ENCODE measurements at regions of chr12 and their contacts with region 1.

Region 1: DNA sequence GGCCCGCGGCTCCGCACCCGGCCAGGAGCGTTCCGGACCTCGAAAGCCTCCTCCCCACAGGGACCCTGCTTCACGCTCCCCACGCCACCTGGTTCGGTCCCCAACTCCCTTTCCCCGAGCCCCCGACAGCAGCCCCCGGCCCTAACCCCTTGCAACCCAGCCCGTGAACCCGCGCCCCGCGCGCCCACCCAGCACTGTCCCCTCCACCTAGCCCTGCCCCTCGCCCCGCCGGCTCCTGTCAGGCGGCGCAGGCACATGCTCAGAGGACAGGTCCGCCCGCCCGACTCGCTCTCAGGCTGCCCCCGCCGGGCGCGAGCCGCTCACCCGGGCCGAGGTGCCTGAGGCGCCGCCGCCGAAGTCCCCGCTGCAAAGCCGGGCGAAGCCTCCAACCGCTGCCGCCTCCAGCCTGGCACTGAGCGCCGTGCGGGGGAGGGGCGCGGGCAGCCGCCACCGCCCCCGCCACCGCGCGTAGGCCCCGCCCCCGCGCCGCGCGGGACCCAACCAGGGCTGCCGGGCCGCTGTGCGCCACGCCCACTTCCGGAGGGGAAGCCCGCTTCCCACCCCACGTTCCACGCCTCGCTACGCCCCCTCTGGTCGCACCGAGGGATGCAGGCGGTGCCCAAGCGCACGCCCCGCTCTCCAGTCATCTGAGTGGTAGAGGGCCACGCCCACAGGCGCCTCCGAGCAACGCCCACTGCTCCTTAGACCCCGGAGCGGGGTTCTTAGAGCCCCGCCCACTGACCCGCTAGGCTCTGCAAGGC is at the start of gene CORO1C:
- DNase-seq: peak; percentile 86 to 97 (median 92)
- ATAC-seq: peak; percentile 75
- H3K4me3 ChIP-seq: peak within 1 kb of the TSS; percentile 91 to 93
- H3K4me3 Mint-ChIP-seq: peak within 1 kb of the TSS; percentile 94
- H3K27ac ChIP-seq: peak within 1 kb of the TSS; percentile 67 to 85
- H3K27ac Mint-ChIP-seq: peak within 1 kb of the TSS; percentile 86
- H3K4me1 ChIP-seq: peaks cover 7% of the 10 kb centered on the region
- H3K4me1 Mint-ChIP-seq: peaks cover 26% of the 10 kb centered on the region
- H3K27me3 ChIP-seq: no peaks in the 10 kb centered on the region
- H3K27me3 Mint-ChIP-seq: no peaks in the 10 kb centered on the region
- CTCF ChIP-seq: peak; percentile 74
- total RNA-seq, gene CORO1C: 10.3 to 15.4 TPM

Region 2: GRCh38 chr12:108691175-108691997 is 39.9 kb before region 1 on chr12:
- CTCF ChIA-PET with region 1: no interaction called
- POLR2A ChIA-PET with region 1: no interaction called
- intact Hi-C with region 1: loop called (anchors 2 kb)
- DNase-seq: peak in 8 of 9 experiments; percentile 47 to 81 (median 68)
- ATAC-seq: peak; percentile 78
- H3K4me3 ChIP-seq: peak overlapping the region; percentile 21 to 30
- H3K4me3 Mint-ChIP-seq: peak overlapping the region; percentile 71
- H3K27ac ChIP-seq: peak overlapping the region in 1 of 2 experiments; percentile 55
- H3K27ac Mint-ChIP-seq: peak overlapping the region; percentile 67
- H3K4me1 ChIP-seq: peaks cover 36% of the 10 kb centered on the region
- H3K4me1 Mint-ChIP-seq: peaks cover 57% of the 10 kb centered on the region
- H3K27me3 ChIP-seq: no peaks in the 10 kb centered on the region
- H3K27me3 Mint-ChIP-seq: no peaks in the 10 kb centered on the region
- CTCF ChIP-seq: no peak

Region 3: GRCh38 chr12:108744021-108744897 is 13.0 kb after region 1 on chr12:
- CTCF ChIA-PET with region 1: no interaction called
- POLR2A ChIA-PET with region 1: no interaction called
- intact Hi-C with region 1: no loop called
- DNase-seq: no peak
- ATAC-seq: no peak
- H3K4me3 ChIP-seq: no peak overlapping the region
- H3K4me3 Mint-ChIP-seq: no peak overlapping the region
- H3K27ac ChIP-seq: no peak overlapping the region
- H3K27ac Mint-ChIP-seq: no peak overlapping the region
- H3K4me1 ChIP-seq: no peaks in the 10 kb centered on the region
- H3K4me1 Mint-ChIP-seq: no peaks in the 10 kb centered on the region
- H3K27me3 ChIP-seq: no peaks in the 10 kb centered on the region
- H3K27me3 Mint-ChIP-seq: peaks cover 2% of the 10 kb centered on the region
- CTCF ChIP-seq: no peak

Region 4: DNA sequence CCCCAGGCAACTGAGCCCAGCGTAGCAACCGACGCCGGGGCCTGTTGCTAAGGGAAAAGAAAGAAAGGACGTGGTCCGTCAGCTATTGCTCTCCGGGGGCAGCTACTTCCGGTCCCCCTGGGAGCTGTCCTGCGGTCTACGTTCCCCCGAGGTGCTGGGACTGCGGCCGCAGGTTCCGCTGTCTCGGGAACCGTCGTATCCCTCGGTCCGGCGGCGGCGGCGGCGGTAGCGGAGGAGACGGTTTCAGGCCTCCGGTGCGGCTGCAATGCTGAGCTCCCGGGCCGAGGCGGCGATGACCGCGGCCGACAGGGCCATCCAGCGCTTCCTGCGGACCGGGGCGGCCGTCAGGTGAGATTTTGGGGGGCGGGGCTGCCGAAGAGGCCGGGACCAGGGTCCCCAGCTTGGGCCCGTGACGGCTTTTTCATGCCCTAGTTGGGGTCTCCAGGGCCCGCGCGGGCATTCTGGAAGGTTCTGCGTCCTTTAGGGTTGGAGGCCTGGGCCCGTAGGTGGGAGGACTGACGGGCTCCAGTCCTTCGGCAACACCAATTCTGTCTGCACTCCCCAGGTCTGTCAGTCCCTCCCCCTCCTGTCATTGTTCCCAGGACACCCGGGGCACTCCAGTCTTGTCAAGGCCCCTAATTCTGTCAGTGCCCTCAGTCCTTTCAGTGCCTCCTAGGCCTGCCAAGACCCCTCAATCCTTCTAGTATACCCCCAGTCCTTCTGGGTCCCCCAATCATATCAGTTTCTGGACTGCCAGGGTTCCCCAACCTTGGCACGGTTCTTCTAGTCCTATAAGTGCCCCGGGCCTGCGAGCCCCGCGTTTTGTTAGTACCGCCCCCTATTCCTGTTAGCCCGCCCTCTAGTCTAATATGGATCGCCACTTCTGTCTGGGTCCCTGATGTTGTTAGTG is 321.4 kb after region 1 on chr12 and contains the start of gene USP30:
- CTCF ChIA-PET with region 1: no interaction called
- POLR2A ChIA-PET with region 1: no interaction called
- intact Hi-C with region 1: loop called in 1 of 2 experiments (anchors 5 kb)
- DNase-seq: peak; percentile 73 to 93 (median 85)
- ATAC-seq: peak; percentile 74
- H3K4me3 ChIP-seq: peak within 1 kb of the TSS; percentile 85 to 90
- H3K4me3 Mint-ChIP-seq: peak within 1 kb of the TSS; percentile 89
- H3K27ac ChIP-seq: peak within 1 kb of the TSS; percentile 68 to 91
- H3K27ac Mint-ChIP-seq: peak within 1 kb of the TSS; percentile 96
- H3K4me1 ChIP-seq: peaks cover 7% of the 10 kb centered on the region
- H3K4me1 Mint-ChIP-seq: peaks cover 21% of the 10 kb centered on the region
- H3K27me3 ChIP-seq: no peaks in the 10 kb centered on the region
- H3K27me3 Mint-ChIP-seq: no peaks in the 10 kb centered on the region
- CTCF ChIP-seq: no peak
- total RNA-seq, gene USP30: 28.2 to 33.1 TPM

Region 5: GRCh38 chr12:109154451-109155438 is 423.5 kb after region 1 on chr12:
- CTCF ChIA-PET with region 1: no interaction called
- POLR2A ChIA-PET with region 1: no interaction called
- intact Hi-C with region 1: loop called (anchors 2 to 10 kb)
- DNase-seq: peak; percentile 60 to 89 (median 78)
- ATAC-seq: peak; percentile 98
- H3K4me3 ChIP-seq: peak overlapping the region; percentile 60 to 80
- H3K4me3 Mint-ChIP-seq: peak overlapping the region; percentile 95
- H3K27ac ChIP-seq: peak overlapping the region; percentile 22 to 46
- H3K27ac Mint-ChIP-seq: peak overlapping the region; percentile 89
- H3K4me1 ChIP-seq: peaks cover 20% of the 10 kb centered on the region
- H3K4me1 Mint-ChIP-seq: peaks cover 17% of the 10 kb centered on the region
- H3K27me3 ChIP-seq: no peaks in the 10 kb centered on the region
- H3K27me3 Mint-ChIP-seq: peaks cover 3% of the 10 kb centered on the region
- CTCF ChIP-seq: no peak